ENCODE measurements at regions of chr5 and their contacts with region 1.

Region 1: DNA sequence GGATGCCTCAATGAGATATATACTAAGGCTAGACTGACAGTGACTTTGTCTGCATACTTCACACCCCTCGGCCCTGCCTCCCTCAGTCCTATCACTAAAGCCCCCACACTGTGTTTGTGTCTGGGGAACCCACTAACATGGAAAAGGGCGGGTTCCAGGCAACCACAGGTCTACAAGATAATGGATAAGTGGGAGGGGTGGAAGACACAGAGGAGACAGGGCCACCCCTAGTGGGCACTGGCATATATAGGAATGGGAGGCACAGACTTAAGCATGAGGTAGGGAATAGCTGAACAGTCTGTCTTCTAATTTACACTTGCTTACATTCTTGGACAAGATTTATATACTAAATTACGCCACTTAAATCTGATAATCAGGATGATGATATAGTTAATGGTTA is 74.0 kb downstream of the SLIT3 start:
- DNase-seq: no peak
- ATAC-seq: no peak

Region 2: GRCh38 chr5:167790462-167791260 is 1436.2 kb before region 1 on chr5:
- intact Hi-C with region 1: no loop called
- DNase-seq: no peak
- ATAC-seq: peak; percentile 47

Region 3: GRCh38 chr5:167969998-167970397 is 1256.9 kb before region 1 on chr5:
- intact Hi-C with region 1: loop called (anchors 10 kb)
- DNase-seq: no peak
- ATAC-seq: peak; percentile 18

Region 4: GRCh38 chr5:168468836-168469235 is 758.1 kb before region 1 on chr5:
- intact Hi-C with region 1: loop called (anchors 5 kb)
- DNase-seq: no peak
- ATAC-seq: no peak

Measured in sciatic nerve (tissue), 2 donors.